ENCODE measurements at regions of chr11 and their contacts with region 1.

Region 1: DNA sequence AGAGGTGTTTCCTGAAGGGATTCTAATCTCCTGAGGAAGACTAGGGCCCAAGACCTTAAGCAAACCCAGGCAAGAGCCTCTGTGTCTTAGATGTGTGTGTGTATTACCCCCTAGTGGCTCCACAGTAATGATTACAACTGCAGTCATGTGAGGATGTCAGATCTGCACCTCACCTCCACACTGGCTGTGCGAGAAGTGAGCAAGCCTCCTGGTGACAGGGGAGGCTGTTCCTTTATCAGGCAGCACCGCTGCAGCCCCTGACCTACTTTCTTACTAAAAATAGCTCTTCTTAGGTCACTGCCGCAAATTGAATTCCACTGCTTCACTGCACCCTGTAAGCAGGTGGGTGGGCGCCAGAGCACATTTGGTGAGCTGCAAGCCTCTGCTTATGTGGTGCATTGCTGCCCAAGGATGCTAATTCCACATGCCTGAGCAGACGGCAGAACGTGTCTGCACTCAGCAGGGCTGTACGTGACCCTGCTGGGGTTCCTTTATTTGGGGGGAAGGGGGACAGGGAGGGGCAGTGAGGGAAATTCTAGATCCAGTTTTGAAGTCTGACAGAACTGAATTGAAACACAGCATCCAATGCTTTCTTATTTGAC is 112.4 kb downstream of the KCNC1 start:
- DNase-seq: peak in 1 of 2 donors; percentile 27
- ATAC-seq: peak in 7 of 8 donors; percentile 59 to 83 (median 76)
- H3K4me3 ChIP-seq: no peak overlapping the region
- H3K27ac ChIP-seq: no peak overlapping the region
- H3K4me1 ChIP-seq: peaks cover 0 to 18% (median 3%) of the 10 kb centered on the region in 9 donors
- H3K27me3 ChIP-seq: no peaks in the 10 kb centered on the region
- CTCF ChIP-seq: peak in 6 of 9 donors; percentile 17 to 51 (median 40)

Region 2: GRCh38 chr11:17328871-17329494 is 518.0 kb before region 1 on chr11:
- intact Hi-C with region 1: no loop called
- DNase-seq: no peak
- ATAC-seq: peak in 4 of 8 donors; percentile 38 to 78 (median 62)
- H3K4me3 ChIP-seq: no peak overlapping the region
- H3K27ac ChIP-seq: no peak overlapping the region
- H3K4me1 ChIP-seq: peaks cover 0 to 7% (median 4%) of the 10 kb centered on the region in 9 donors
- H3K27me3 ChIP-seq: no peaks in the 10 kb centered on the region
- CTCF ChIP-seq: no peak

Region 3: GRCh38 chr11:17730608-17731462 is 116.1 kb before region 1 on chr11:
- intact Hi-C with region 1: loop called in 1 of 10 experiments (anchors 5 kb)
- DNase-seq: peak; percentile 81 to 82
- ATAC-seq: peak; percentile 72 to 93 (median 90)
- H3K4me3 ChIP-seq: no peak overlapping the region
- H3K27ac ChIP-seq: no peak overlapping the region
- H3K4me1 ChIP-seq: peaks cover 4 to 20% (median 9%) of the 10 kb centered on the region in 9 donors
- H3K27me3 ChIP-seq: peaks cover 0 to 63% (median 49%) of the 10 kb centered on the region in 7 donors
- CTCF ChIP-seq: peak; percentile 74 to 93 (median 84)

Region 4: DNA sequence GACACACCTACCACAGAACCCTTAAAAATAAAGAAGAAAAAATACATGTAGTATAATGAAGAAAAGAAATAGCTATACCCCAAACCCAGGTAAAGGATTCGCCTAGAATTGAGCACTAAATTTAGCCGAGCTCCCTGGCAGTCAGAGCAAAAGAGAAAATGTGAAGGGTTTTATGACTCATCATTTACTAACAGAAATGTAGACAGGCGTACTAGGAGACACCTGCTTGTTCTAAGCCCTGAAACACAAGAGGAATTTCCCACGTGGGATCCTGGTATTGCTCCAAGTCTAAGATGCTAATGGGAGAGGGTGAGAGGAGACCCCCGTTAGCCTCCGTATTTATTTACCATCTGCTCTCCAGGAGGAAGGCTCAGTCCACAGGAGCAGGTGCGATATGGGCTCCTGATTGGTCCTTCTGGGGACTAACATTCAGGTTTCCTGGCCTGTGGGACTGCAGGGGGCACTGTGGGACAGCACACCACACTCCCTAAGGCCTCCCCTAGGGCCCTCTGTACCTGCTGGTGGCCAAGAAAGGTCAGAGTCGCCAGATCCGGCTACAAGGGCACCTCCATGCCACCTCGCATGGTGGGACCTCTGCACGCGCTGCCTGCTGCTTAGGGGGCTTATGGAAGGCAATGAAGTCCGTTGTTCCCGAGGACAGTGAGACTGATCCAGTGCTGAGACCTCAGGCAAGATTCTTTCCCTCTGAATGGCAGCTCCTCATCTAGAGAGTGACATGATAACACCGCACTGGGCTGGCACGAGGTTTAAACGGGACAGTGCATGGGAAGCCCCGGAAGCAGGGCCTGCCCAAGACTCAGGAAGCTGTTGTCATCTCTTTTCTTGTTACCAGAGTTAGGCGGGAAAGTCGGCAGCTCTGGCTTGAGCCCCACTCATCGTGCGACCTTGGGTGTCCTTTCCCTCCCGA is 86.6 kb before region 1 on chr11:
- intact Hi-C with region 1: loop called in 1 of 10 experiments (anchors 10 kb)
- DNase-seq: peak; percentile 40 to 43
- ATAC-seq: peak; percentile 79 to 87 (median 85)
- H3K4me3 ChIP-seq: no peak overlapping the region
- H3K27ac ChIP-seq: no peak overlapping the region
- H3K4me1 ChIP-seq: peaks cover 0 to 4% (median 0%) of the 10 kb centered on the region in 9 donors
- H3K27me3 ChIP-seq: no peaks in the 10 kb centered on the region
- CTCF ChIP-seq: peak; percentile 30 to 77 (median 61)

Region 5: GRCh38 chr11:17770048-17770652 is 76.8 kb before region 1 on chr11:
- intact Hi-C with region 1: loop called in 2 of 10 experiments (anchors 5 to 10 kb)
- DNase-seq: no peak
- ATAC-seq: no peak
- H3K4me3 ChIP-seq: no peak overlapping the region
- H3K27ac ChIP-seq: no peak overlapping the region
- H3K4me1 ChIP-seq: no peaks in the 10 kb centered on the region
- H3K27me3 ChIP-seq: no peaks in the 10 kb centered on the region
- CTCF ChIP-seq: no peak